Pancreas (tissue), 10 donors: ENCODE measurements at regions of chr1 and their contacts with region 1.

Region 1: GRCh38 chr1:11838349-11839272 is 9.0 kb downstream of the NPPA start:
- DNase-seq: peak; percentile 35 to 90 (median 72)
- ATAC-seq: peak; percentile 87 to 96 (median 92)
- H3K4me3 ChIP-seq: no peak overlapping the region
- H3K27ac ChIP-seq: no peak overlapping the region
- H3K4me1 ChIP-seq: no peaks in the 10 kb centered on the region
- H3K27me3 ChIP-seq: no peaks in the 10 kb centered on the region
- CTCF ChIP-seq: peak; percentile 79 to 93 (median 92)

Region 2: DNA sequence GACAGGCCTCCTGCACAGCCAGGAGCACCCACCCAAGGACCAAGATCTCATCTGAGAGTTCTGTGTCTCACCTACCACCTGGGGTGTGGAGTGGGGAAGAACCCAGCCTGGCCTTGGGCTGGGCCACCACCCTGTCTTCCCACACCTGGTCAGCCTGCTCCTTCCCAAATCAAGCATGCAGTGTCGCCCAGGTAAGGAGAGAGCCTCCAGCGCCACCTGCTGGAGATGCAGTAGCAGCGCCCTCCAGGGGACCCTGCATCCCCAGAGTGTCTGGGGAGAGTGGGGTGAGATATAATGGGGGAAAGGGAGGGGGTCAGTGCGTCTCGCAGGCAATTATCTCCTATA is 55.3 kb after region 1 on chr1:
- intact Hi-C with region 1: loop called (anchors 5 to 10 kb)
- DNase-seq: peak; percentile 52 to 92 (median 78)
- ATAC-seq: peak; percentile 82 to 98 (median 95)
- H3K4me3 ChIP-seq: no peak overlapping the region
- H3K27ac ChIP-seq: no peak overlapping the region
- H3K4me1 ChIP-seq: no peaks in the 10 kb centered on the region
- H3K27me3 ChIP-seq: peaks cover 0 to 6% (median 0%) of the 10 kb centered on the region in 4 donors
- CTCF ChIP-seq: peak; percentile 71 to 86 (median 78)

Region 3: DNA sequence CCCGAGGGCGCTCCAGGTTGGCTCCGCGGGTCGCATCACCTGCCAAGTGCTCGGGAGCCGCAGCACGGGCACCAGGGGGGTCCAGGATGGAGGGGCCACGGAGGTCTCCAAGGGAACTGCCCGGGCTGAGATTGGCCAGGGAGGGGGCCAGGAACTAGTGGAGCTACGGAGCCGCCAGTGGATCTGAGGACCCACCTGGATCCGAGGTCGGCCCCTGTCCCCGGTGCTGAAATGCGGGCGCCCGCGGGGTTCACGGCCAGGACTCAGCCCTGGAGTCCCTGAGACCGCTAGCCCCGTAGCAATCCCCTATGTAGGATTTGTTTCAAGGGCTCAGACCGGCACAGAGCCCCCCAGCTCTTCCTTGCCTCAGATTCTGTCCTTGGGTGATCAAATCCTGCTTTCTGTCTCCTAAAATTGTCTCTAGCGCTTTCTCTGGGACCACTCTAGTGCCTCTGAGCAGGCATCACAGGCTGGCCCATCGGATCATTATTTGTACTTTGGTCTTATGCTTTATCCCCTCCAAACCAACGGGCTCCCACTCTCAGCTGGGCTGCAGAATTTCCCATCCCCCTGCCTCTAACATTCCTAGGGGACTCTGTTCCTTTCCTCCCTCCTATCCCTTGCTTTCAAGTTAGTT is 60.3 kb after region 1 on chr1:
- intact Hi-C with region 1: loop called (anchors 5 to 10 kb)
- DNase-seq: peak in 2 of 6 donors; percentile 68 to 74
- ATAC-seq: peak in 3 of 4 donors; percentile 39 to 66 (median 49)
- H3K4me3 ChIP-seq: no peak overlapping the region
- H3K27ac ChIP-seq: no peak overlapping the region
- H3K4me1 ChIP-seq: no peaks in the 10 kb centered on the region
- H3K27me3 ChIP-seq: peaks cover 0 to 11% (median 2%) of the 10 kb centered on the region in 4 donors
- CTCF ChIP-seq: no peak

Region 4: DNA sequence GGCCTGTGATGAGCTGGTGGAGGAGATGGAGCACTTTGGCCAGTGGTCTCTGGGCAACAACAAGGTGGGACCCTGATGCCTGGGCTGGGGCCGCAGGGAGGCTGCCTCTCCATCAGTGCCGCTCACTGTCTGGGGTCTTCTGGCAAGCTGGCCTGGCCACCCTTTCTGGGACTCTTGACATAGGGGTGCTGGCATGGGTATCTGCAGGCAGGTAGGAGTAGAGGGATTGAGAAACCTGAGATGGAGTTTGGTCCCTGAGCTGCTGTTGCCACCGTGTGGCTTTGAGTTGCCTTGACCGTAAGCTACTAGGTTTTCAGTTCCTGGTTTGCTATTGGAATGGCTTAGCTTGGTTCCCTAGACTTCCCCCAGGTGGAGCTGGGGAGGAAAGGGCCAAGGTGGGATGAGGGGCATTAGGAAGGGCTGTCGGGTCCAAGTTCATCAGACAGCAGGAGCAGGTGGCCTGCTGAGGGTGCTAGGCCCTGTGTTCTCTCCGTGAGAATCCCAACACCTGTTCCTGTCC is 128.5 kb after region 1 on chr1:
- intact Hi-C with region 1: loop called in 1 of 3 experiments (anchors 10 kb)
- DNase-seq: peak in 4 of 6 donors; percentile 70 to 81 (median 76)
- ATAC-seq: peak; percentile 89 to 97 (median 94)
- H3K4me3 ChIP-seq: no peak overlapping the region
- H3K27ac ChIP-seq: peak overlapping the region in 1 of 4 donors; percentile 27
- H3K4me1 ChIP-seq: peaks cover 0 to 4% (median 0%) of the 10 kb centered on the region in 3 donors
- H3K27me3 ChIP-seq: no peaks in the 10 kb centered on the region
- CTCF ChIP-seq: peak; percentile 17 to 42 (median 33)

Region 5: DNA sequence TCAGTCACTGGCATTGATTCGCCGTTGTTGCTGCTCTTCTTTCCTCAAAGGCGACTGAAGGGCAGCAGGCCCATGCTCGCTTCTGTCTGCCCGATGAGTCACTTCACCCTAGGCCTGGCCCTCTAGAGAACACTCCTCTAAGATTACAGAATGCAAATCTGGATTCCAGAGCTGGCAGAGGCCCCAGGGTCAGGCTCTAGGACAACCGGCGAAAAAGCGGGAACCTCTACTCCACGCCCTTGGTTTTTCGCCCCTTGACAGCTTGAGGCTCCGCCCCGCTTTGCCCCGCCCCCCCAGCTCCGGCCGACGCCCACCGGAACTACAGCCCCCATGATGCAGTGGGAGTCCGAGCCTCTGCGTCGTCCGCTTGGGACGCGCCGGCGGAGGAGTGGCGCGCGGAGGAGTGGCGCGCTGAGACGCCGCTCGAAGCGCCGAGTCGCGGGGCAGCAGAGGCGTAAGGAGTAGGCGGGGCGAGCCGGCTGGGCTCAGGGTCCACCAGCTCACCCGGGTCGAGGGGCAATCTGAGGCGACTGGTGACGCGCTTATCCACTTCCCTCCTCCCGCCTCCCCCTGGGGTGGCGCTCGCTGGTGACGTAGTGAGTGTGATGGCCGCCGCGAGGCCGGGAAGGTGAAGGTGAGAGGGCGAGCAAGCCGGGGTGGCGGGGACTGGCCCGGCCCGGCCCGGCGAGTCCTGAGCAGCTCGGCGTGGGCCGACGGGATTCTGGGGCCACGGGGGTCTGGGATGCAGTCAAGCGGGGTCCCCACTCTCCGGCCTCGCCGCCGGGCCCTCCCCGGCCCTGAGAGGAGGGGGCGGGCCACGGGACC is 141.5 kb after region 1 on chr1 and contains the start of gene MFN2:
- intact Hi-C with region 1: loop called in 1 of 3 experiments (anchors 10 kb)
- DNase-seq: peak; percentile 94 to 98 (median 97)
- ATAC-seq: peak; percentile 93 to 97 (median 94)
- H3K4me3 ChIP-seq: peak within 1 kb of the TSS; percentile 85 to 98 (median 94)
- H3K27ac ChIP-seq: peak within 1 kb of the TSS; percentile 88 to 95 (median 92)
- H3K4me1 ChIP-seq: peaks cover 4 to 26% (median 6%) of the 10 kb centered on the region in 3 donors
- H3K27me3 ChIP-seq: no peaks in the 10 kb centered on the region
- CTCF ChIP-seq: no peak
- total RNA-seq, gene MFN2: 20.4 to 34.4 (median 26.0) TPM